AG04449 (cell line): ENCODE measurements at regions of chr22 and their contacts with region 1.

Region 1: GRCh38 chr22:49930739-49931412 is 12.4 kb downstream of the CRELD2 start:
- DNase-seq: no peak
- H3K4me3 ChIP-seq: no peak overlapping the region
- CTCF ChIP-seq: peak; percentile 64

Region 2: GRCh38 chr22:49701380-49702067 is 229.4 kb before region 1 on chr22:
- CTCF ChIA-PET with region 1: no interaction called
- POLR2A ChIA-PET with region 1: no interaction called
- DNase-seq: no peak
- H3K4me3 ChIP-seq: no peak overlapping the region
- CTCF ChIP-seq: no peak

Region 3: GRCh38 chr22:49734882-49735281 is 196.0 kb before region 1 on chr22:
- CTCF ChIA-PET with region 1: no interaction called
- POLR2A ChIA-PET with region 1: no interaction called
- DNase-seq: no peak
- H3K4me3 ChIP-seq: no peak overlapping the region
- CTCF ChIP-seq: no peak

Region 4: DNA sequence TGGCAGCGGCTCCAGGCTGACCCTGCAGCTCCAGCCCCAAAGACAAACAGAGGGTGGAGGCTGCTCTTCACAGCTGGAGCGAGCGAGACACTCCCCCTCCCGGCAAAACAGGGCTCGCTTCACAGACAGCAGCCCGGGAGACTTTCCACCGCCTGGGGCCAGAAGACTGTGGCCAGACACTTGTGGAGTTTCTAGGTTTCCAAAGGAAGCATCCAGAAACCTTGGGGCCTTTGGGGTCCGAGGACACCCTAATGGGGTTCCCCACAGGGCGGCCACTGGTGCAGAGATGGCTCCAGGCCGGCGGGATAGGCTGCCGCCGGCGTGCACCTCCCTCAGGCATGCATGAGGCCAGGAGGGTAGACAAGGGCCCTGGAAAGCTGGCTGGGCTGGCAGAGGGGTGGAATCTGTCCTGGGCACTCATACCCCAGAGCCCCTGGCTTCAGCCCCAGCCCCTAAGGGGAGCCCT is 81.9 kb after region 1 on chr22 and contains the start of gene IL17REL:
- CTCF ChIA-PET with region 1: interaction called, 16 read pairs
- POLR2A ChIA-PET with region 1: no interaction called
- DNase-seq: no peak
- H3K4me3 ChIP-seq: no peak within 1 kb of the TSS
- CTCF ChIP-seq: peak; percentile 21

Region 5: GRCh38 chr22:50157709-50158375 is 227.0 kb after region 1 on chr22:
- CTCF ChIA-PET with region 1: no interaction called
- POLR2A ChIA-PET with region 1: no interaction called
- DNase-seq: no peak
- H3K4me3 ChIP-seq: no peak overlapping the region
- CTCF ChIP-seq: no peak

Region 6: GRCh38 chr22:50169774-50170341 is 239.0 kb after region 1 on chr22:
- CTCF ChIA-PET with region 1: no interaction called
- POLR2A ChIA-PET with region 1: no interaction called
- DNase-seq: no peak
- H3K4me3 ChIP-seq: peak overlapping the region; percentile 45
- CTCF ChIP-seq: no peak